ENCODE measurements at regions of chr13 and their contacts with region 1.

Region 1: DNA sequence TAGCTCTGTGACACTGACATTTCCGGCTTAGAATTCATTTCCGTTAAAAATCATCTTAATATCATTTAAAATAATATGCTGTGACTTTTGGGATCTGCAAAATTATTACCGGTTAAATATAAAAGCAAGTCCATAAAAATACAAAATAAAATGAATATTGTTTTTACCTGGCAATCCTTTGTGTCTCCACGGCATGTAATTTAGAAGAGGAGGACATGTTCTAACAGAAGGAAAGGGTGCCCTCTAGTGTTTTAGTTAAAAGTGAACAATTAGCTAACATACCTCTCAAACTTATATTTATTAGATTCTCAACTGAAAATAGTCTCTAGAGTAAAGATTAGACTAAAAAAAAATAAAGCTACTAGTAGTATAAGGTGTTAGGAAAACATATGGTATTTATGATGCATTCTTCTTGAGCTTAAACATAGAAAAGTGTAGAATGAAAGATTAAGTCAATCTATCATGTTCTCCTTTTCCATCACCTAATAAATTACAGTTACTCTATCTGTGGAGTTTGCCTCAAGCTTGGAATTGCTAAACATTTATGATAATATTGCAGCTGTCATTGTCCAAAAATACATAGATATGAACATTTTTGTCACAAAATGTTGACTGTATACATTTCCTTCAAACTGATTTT is 676.7 kb upstream of the SPRY2 start:
- DNase-seq: no peak
- H3K4me3 Mint-ChIP-seq: no peak overlapping the region
- H3K27ac Mint-ChIP-seq: no peak overlapping the region
- H3K4me1 Mint-ChIP-seq: no peaks in the 10 kb centered on the region
- H3K27me3 Mint-ChIP-seq: no peaks in the 10 kb centered on the region

Region 2: GRCh38 chr13:80342471-80343380 is 674.9 kb before region 1 on chr13:
- intact Hi-C with region 1: loop called (anchors 2 kb)
- DNase-seq: peak; percentile 91
- H3K4me3 Mint-ChIP-seq: peak overlapping the region; percentile 72
- H3K27ac Mint-ChIP-seq: no peak overlapping the region
- H3K4me1 Mint-ChIP-seq: peaks cover 8% of the 10 kb centered on the region
- H3K27me3 Mint-ChIP-seq: peaks cover 39% of the 10 kb centered on the region

Region 3: GRCh38 chr13:80979035-80979641 is 38.5 kb before region 1 on chr13:
- intact Hi-C with region 1: loop called (anchors 2 kb)
- DNase-seq: peak; percentile 71
- H3K4me3 Mint-ChIP-seq: no peak overlapping the region
- H3K27ac Mint-ChIP-seq: no peak overlapping the region
- H3K4me1 Mint-ChIP-seq: no peaks in the 10 kb centered on the region
- H3K27me3 Mint-ChIP-seq: no peaks in the 10 kb centered on the region